ENCODE measurements at regions of chr12 and their contacts with region 1.

Region 1: DNA sequence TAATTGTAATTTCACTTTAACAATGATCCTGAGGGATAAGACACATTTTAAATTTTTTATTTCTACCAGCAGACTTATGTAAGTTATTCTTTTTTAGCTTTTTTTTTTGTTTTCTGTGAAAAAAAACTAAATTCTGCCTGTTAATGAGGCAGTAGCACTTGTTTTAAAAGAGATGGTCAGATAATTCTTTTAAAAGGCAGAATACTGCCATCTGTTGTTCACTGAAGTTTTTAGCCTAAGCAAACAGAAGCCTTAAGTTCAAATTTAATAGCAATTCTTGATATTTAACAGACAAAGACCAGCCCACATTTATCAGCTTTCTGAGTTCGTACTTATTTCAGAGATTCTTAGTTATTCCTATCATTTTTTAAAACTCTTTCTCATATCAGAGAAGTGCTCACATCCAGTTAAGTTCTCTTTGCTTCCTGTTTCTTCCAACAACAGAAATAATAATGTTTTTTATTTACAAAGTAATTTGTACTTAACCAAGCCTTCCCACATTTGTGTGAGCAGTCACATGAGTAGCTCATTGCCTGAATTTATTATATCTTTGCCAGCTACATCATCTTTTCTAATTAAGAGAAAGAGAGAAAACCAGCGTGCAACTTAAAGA is 93.4 kb upstream of the SLCO1C1 start:
- DNase-seq: no peak
- H3K4me3 ChIP-seq: no peak overlapping the region
- H3K27ac ChIP-seq: no peak overlapping the region
- H3K4me1 ChIP-seq: no peaks in the 10 kb centered on the region
- H3K27me3 ChIP-seq: no peaks in the 10 kb centered on the region
- CTCF ChIP-seq: peak in 2 of 3 donors; percentile 26 to 50
- EP300 ChIP-seq: no peak
- POLR2A ChIP-seq: no peak

Region 2: GRCh38 chr12:19744734-19745218 is 857.0 kb before region 1 on chr12:
- intact Hi-C with region 1: loop called in 1 of 4 experiments (anchors 10 kb)
- DNase-seq: no peak
- H3K4me3 ChIP-seq: no peak overlapping the region
- H3K27ac ChIP-seq: no peak overlapping the region
- H3K4me1 ChIP-seq: peaks cover 2% of the 10 kb centered on the region
- H3K27me3 ChIP-seq: no peaks in the 10 kb centered on the region
- CTCF ChIP-seq: no peak
- EP300 ChIP-seq: no peak
- POLR2A ChIP-seq: no peak

Region 3: GRCh38 chr12:20463913-20464524 is 137.8 kb before region 1 on chr12:
- intact Hi-C with region 1: loop called in 1 of 4 experiments (anchors 10 kb)
- DNase-seq: no peak
- H3K4me3 ChIP-seq: no peak overlapping the region
- H3K27ac ChIP-seq: no peak overlapping the region
- H3K4me1 ChIP-seq: peaks cover 5% of the 10 kb centered on the region
- H3K27me3 ChIP-seq: no peaks in the 10 kb centered on the region
- CTCF ChIP-seq: peak in 1 of 3 donors; percentile 32
- EP300 ChIP-seq: no peak
- POLR2A ChIP-seq: no peak

Region 4: DNA sequence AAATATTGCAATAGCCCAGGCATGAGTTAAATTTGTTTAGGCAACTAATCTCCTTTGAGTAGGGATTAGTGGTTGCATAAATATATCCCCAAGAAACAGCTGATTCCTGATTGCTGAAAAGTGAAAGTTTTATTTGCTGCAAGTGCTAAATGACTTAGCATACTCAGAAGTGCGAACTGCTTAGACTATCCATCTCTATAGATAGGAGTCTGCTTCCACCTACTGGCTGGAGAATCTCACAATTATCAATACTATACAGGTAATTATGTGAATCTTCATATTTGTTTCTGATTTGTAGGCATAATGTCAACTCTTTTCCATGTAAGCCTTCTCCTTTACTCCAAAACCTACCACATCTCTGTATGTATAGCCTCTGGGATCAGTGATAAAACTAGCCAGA is 196.8 kb after region 1 on chr12:
- intact Hi-C with region 1: no loop called
- DNase-seq: no peak
- H3K4me3 ChIP-seq: no peak overlapping the region
- H3K27ac ChIP-seq: no peak overlapping the region
- H3K4me1 ChIP-seq: no peaks in the 10 kb centered on the region
- H3K27me3 ChIP-seq: no peaks in the 10 kb centered on the region
- CTCF ChIP-seq: no peak
- EP300 ChIP-seq: no peak
- POLR2A ChIP-seq: no peak

Measured in ovary (tissue), 10 donors.